ENCODE measurements at regions of chr3 and their contacts with region 1.

Region 1: GRCh38 chr3:178436773-178437172 is 99.5 kb upstream of the KCNMB2 start:
- DNase-seq: peak; percentile 46
- H3K4me3 ChIP-seq: no peak overlapping the region
- CTCF ChIP-seq: peak; percentile 42

Region 2: DNA sequence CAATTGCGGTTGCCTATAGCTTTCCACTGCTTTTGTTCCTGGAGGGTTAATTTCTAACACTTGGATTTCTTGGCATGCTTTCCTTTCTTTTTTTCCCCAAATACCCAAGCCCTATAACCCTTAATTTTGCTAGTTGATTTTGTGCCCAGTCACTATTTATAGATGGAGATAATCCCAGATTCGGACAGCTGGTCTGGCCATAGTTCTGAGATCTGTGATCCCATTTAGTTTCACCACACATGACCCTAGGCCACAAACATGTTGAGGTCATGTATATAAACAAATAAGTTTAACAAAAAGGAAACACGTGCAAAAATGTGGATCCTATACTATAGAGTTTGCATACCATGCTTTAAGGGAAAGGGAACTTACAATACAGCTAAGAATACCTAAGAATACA is 523.4 kb after region 1 on chr3:
- in situ Hi-C with region 1: loop called (anchors 5 kb)
- DNase-seq: no peak
- H3K4me3 ChIP-seq: no peak overlapping the region
- CTCF ChIP-seq: no peak

Measured in astrocyte of the cerebellum (primary cell).